Activated CD4-positive, alpha-beta memory T cell treated with anti-CD3 and anti-CD28 coated beads, Interleukin-2, amount 10 ng/mL, durations not matched to agents 7 days and 5 days (primary cell): ENCODE measurements at regions of chr12 and their contacts with region 1.

Region 1: GRCh38 chr12:2884810-2885209 is 5.9 kb upstream of the TULP3 start:
- DNase-seq: no peak
- H3K4me3 Mint-ChIP-seq: no peak overlapping the region
- H3K27ac Mint-ChIP-seq: peak overlapping the region; percentile 2
- H3K4me1 Mint-ChIP-seq: peaks cover 50% of the 10 kb centered on the region
- H3K27me3 Mint-ChIP-seq: no peaks in the 10 kb centered on the region

Region 2: GRCh38 chr12:2944401-2945047 is 59.7 kb after region 1 on chr12:
- CTCF ChIA-PET with region 1: interaction called, 20 read pairs
- POLR2A ChIA-PET with region 1: interaction called, 3 read pairs
- DNase-seq: peak; percentile 65
- H3K4me3 Mint-ChIP-seq: no peak overlapping the region
- H3K27ac Mint-ChIP-seq: no peak overlapping the region
- H3K4me1 Mint-ChIP-seq: peaks cover 4% of the 10 kb centered on the region
- H3K27me3 Mint-ChIP-seq: peaks cover 4% of the 10 kb centered on the region